ENCODE measurements at regions of chr17 and their contacts with region 1.

Region 1: GRCh38 chr17:10844621-10845387 is 6.9 kb upstream of the PIRT start:
- DNase-seq: peak; percentile 84
- H3K4me3 ChIP-seq: peak overlapping the region; percentile 38 to 56
- H3K27ac ChIP-seq: no peak overlapping the region
- H3K4me1 ChIP-seq: peaks cover 0 to 4% of the 10 kb centered on the region in 2 experiments; a peak in 1 of 4 replicates
- H3K27me3 ChIP-seq: no peaks in the 10 kb centered on the region
- CTCF ChIP-seq: peak; percentile 76
- EP300 ChIP-seq: no peak
- RAD21 ChIP-seq: peak; percentile 84

Region 2: DNA sequence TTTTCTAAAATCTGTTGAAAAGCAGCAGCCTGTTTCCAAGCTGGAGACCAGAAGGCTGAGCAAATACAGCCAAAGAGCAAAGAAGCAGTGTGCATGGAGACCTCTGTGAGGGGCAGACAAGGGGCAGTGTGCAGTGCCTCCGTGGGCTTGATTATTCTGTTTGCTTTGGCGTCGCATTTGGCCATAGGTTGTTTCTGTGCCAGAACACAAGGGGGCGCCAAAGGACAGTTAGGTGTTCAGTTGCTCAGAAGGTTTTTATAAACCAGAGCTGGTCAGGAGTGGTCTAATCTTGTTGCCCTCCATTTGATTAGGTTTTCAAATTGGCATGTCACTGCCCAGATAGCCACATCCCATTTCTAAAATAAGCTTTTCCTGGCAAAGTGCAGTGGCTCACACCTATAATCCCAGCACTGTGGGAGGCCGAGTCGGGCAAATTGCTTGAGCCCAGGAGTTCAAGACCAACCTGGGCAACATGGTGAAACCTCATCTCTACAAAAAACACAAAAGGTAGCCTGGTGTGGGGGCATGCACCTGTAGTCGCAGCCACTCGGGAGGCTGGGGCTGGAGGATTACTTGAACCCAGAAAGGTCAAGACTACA is 198.3 kb before region 1 on chr17:
- CTCF ChIA-PET with region 1: interaction called, 22 read pairs
- POLR2A ChIA-PET with region 1: no interaction called
- DNase-seq: peak; percentile 71
- H3K4me3 ChIP-seq: peak overlapping the region in 1 of 2 experiments; percentile 21; a peak in 1 of 4 replicates
- H3K27ac ChIP-seq: no peak overlapping the region
- H3K4me1 ChIP-seq: no peaks in the 10 kb centered on the region
- H3K27me3 ChIP-seq: no peaks in the 10 kb centered on the region
- CTCF ChIP-seq: peak; percentile 86
- EP300 ChIP-seq: no peak
- RAD21 ChIP-seq: peak; percentile 84

Region 3: GRCh38 chr17:10718547-10718946 is 126.3 kb before region 1 on chr17:
- CTCF ChIA-PET with region 1: no interaction called
- POLR2A ChIA-PET with region 1: no interaction called
- DNase-seq: no peak
- H3K4me3 ChIP-seq: no peak overlapping the region
- H3K27ac ChIP-seq: no peak overlapping the region
- H3K4me1 ChIP-seq: no peaks in the 10 kb centered on the region
- H3K27me3 ChIP-seq: no peaks in the 10 kb centered on the region
- CTCF ChIP-seq: no peak
- EP300 ChIP-seq: no peak
- RAD21 ChIP-seq: no peak

Region 4: DNA sequence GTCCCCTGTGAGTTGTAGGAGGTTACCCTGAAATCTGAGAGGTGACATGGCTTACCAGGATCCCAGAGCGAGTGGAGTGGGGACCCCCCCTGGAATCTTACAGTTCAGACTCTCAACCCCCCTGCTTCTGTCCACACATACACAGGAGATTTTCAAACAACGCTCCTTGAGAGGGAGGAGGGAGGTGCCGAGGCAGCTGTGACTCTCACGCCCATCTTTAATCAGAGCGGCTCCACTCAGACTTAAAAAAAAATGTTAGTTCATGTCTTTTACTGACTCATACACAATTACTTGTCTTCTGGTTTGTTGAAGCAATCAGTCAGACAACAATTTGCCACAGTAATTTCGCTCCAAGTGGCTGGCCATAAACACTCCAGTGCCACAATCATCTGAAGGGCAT is 99.6 kb before region 1 on chr17:
- CTCF ChIA-PET with region 1: interaction called, 165 read pairs
- POLR2A ChIA-PET with region 1: no interaction called
- DNase-seq: no peak
- H3K4me3 ChIP-seq: no peak overlapping the region
- H3K27ac ChIP-seq: no peak overlapping the region; a peak in 1 of 4 replicates
- H3K4me1 ChIP-seq: peaks cover 0 to 41% of the 10 kb centered on the region in 2 experiments; a peak in 2 of 4 replicates
- H3K27me3 ChIP-seq: no peaks in the 10 kb centered on the region; the same call in 1 of the 2 replicates
- CTCF ChIP-seq: no peak
- EP300 ChIP-seq: no peak
- RAD21 ChIP-seq: no peak

Region 5: GRCh38 chr17:10754109-10754508 is 90.7 kb before region 1 on chr17:
- CTCF ChIA-PET with region 1: interaction called, 21 read pairs
- POLR2A ChIA-PET with region 1: no interaction called
- DNase-seq: peak; percentile 65
- H3K4me3 ChIP-seq: no peak overlapping the region
- H3K27ac ChIP-seq: no peak overlapping the region
- H3K4me1 ChIP-seq: peaks cover 0 to 46% of the 10 kb centered on the region in 2 experiments; a peak in 1 of 4 replicates
- H3K27me3 ChIP-seq: no peaks in the 10 kb centered on the region
- CTCF ChIP-seq: peak; percentile 48
- EP300 ChIP-seq: no peak
- RAD21 ChIP-seq: peak; percentile 44

Region 6: DNA sequence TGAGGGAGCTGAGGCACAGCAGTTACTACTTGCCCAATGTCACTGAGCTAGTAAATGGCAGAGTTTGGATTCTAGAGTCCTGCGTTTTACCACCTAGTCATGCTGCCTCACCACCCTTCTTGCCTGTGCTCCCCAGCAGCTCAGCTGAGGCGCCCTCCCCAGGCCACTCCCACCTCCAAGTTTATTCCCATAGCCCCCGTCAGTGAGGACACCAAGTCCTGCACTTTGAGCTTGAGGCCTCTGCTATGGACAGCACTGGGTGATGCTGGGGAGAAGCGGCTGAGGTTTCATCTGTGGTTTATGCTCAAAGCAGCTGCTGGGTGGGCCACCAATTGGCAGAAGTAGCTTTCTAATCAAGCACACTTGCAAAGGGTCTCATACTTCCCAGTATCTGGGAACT is 77.6 kb before region 1 on chr17:
- CTCF ChIA-PET with region 1: interaction called, 13 read pairs
- POLR2A ChIA-PET with region 1: no interaction called
- DNase-seq: no peak
- H3K4me3 ChIP-seq: no peak overlapping the region
- H3K27ac ChIP-seq: no peak overlapping the region
- H3K4me1 ChIP-seq: peaks cover 0 to 10% of the 10 kb centered on the region in 2 experiments; a peak in 1 of 4 replicates
- H3K27me3 ChIP-seq: no peaks in the 10 kb centered on the region
- CTCF ChIP-seq: no peak
- EP300 ChIP-seq: no peak
- RAD21 ChIP-seq: no peak

Region 7: GRCh38 chr17:10956821-10957220 is 112.0 kb after region 1 on chr17:
- CTCF ChIA-PET with region 1: no interaction called
- POLR2A ChIA-PET with region 1: no interaction called
- DNase-seq: no peak
- H3K4me3 ChIP-seq: no peak overlapping the region
- H3K27ac ChIP-seq: no peak overlapping the region
- H3K4me1 ChIP-seq: no peaks in the 10 kb centered on the region
- H3K27me3 ChIP-seq: no peaks in the 10 kb centered on the region
- CTCF ChIP-seq: no peak
- EP300 ChIP-seq: no peak
- RAD21 ChIP-seq: no peak

Measured in SK-N-SH (cell line).